ENCODE measurements at regions of chr6 and their contacts with region 1.

Region 1: DNA sequence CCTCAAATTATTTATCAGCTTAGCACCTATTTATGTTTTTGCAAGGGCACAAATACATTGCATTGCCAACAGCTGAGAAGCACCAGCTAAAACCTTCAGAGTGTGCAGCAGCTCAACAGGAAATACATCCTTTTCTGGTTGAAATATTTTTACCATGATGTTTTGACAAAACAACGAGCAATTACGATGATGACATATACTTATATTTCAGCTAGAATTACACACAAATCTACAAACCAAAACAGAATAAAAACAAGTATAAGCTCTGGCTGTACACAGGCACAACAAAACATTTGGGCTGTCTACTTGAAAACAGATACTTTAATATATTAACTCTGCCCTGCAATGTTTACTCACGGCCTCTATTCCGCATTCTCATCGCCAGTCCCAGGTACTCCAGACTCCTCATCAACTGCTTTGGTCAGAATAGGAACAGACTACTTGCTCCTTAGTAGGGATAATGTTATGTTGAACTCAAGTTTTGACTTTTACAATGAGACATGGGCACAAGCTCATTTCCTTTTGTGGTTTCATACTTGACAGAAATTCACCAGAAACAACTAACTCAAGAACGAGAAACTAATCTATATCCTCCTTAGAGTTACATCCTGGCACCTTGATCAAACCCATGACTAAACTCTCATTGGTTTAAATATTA is 377.6 kb downstream of the ESR1 start:
- DNase-seq: peak; percentile 66
- H3K4me3 ChIP-seq: peak overlapping the region; percentile 63
- H3K27ac ChIP-seq: peak overlapping the region; percentile 83
- H3K4me1 ChIP-seq: peaks cover 45% of the 10 kb centered on the region
- CTCF ChIP-seq: no peak

Region 2: DNA sequence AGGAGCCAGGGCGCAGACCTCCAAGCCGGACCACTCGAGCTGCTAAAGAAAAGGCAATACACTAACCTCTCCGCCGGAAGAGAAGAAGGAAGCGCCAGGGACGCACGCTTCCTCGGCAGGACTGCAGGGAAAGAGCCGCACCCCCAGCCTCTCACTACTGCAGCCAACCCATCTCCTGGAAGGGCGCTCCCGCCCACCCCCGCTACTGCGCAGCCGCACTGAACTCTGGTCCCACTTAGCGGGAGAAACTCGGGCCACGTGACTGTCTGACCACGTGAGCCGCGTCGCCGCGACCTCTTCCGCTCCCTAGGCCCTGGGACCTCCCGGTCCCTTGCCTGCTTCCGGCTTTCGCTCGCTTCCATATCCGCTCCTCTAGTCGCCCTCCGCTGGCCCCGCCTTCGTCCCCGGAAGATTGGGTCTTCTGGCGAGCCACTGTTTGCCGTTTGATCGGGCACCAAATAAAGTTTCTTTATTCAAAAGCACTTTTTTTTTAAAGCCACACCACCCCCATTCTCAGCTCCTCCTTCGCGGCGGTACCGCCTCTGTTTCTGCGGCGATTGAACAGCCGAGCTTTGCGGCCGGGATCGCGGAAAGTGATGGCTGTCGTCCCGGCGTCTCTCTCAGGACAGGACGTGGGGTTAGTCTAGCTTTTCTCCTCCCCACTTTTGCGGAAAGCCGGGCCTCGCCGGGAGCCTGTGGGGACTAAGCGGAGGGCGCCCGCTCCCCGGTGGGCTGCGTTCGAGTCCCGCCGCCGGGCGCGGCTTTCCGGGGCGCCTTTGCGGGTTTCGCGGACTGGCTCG is 732.9 kb before region 1 on chr6 and contains the start of gene RMND1:
- CTCF ChIA-PET with region 1: no interaction called
- POLR2A ChIA-PET with region 1: no interaction called
- intact Hi-C with region 1: no loop called
- DNase-seq: peak; percentile 100
- H3K4me3 ChIP-seq: peak within 1 kb of the TSS; percentile 79
- H3K27ac ChIP-seq: peak within 1 kb of the TSS; percentile 70
- H3K4me1 ChIP-seq: peaks cover 24% of the 10 kb centered on the region
- CTCF ChIP-seq: no peak
- total RNA-seq, gene RMND1: 10.2 and 21.2 TPM in 2 replicates

Region 3: DNA sequence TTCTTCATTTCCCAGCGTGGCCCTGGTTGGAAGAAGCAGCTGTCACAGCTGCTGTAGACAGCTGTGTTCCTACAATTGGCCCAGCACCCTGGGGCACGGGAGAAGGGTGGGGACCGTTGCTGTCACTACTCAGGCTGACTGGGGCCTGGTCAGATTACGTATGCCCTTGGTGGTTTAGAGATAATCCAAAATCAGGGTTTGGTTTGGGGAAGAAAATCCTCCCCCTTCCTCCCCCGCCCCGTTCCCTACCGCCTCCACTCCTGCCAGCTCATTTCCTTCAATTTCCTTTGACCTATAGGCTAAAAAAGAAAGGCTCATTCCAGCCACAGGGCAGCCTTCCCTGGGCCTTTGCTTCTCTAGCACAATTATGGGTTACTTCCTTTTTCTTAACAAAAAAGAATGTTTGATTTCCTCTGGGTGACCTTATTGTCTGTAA is 84.8 kb before region 1 on chr6:
- CTCF ChIA-PET with region 1: no interaction called
- POLR2A ChIA-PET with region 1: no interaction called
- intact Hi-C with region 1: no loop called
- DNase-seq: no peak
- H3K4me3 ChIP-seq: no peak overlapping the region
- H3K27ac ChIP-seq: no peak overlapping the region
- H3K4me1 ChIP-seq: no peaks in the 10 kb centered on the region
- CTCF ChIP-seq: no peak

Region 4: GRCh38 chr6:152167641-152168603 is 17.1 kb before region 1 on chr6:
- CTCF ChIA-PET with region 1: interaction called, 4 read pairs
- POLR2A ChIA-PET with region 1: interaction called, 13 read pairs
- intact Hi-C with region 1: no loop called
- DNase-seq: no peak
- H3K4me3 ChIP-seq: no peak overlapping the region
- H3K27ac ChIP-seq: no peak overlapping the region
- H3K4me1 ChIP-seq: no peaks in the 10 kb centered on the region
- CTCF ChIP-seq: no peak

Region 5: DNA sequence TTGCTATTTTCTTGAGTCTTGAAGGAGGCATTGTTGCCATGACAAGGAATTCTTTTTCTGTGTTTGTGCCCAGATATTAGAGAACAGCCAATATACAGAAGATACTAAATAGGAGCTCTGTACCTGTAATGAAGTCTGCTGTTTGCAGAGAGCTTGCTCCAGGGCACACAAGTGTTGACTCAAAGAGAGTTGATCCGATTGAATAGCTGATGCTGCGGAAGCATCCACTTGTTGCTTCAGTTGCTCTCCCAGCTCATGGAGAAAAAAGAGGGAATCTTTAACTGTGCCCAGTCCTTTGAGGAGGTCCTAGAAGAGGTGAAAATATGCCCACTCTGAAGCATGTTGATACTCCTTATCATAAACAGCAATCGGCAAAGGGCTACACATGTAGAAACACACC is 33.8 kb after region 1 on chr6:
- CTCF ChIA-PET with region 1: no interaction called
- POLR2A ChIA-PET with region 1: interaction called, 10 read pairs
- intact Hi-C with region 1: no loop called
- DNase-seq: no peak
- H3K4me3 ChIP-seq: no peak overlapping the region
- H3K27ac ChIP-seq: no peak overlapping the region
- H3K4me1 ChIP-seq: no peaks in the 10 kb centered on the region
- CTCF ChIP-seq: no peak

Region 6: GRCh38 chr6:152267967-152268845 is 83.2 kb after region 1 on chr6:
- CTCF ChIA-PET with region 1: no interaction called
- POLR2A ChIA-PET with region 1: no interaction called
- intact Hi-C with region 1: no loop called
- DNase-seq: peak; percentile 46
- H3K4me3 ChIP-seq: no peak overlapping the region
- H3K27ac ChIP-seq: no peak overlapping the region
- H3K4me1 ChIP-seq: no peaks in the 10 kb centered on the region
- CTCF ChIP-seq: peak; percentile 89

Region 7: GRCh38 chr6:152295346-152295745 is 110.3 kb after region 1 on chr6:
- CTCF ChIA-PET with region 1: interaction called, 3 read pairs
- POLR2A ChIA-PET with region 1: interaction called, 70 read pairs
- intact Hi-C with region 1: loop called (anchors 2 kb)
- DNase-seq: no peak
- H3K4me3 ChIP-seq: no peak overlapping the region
- H3K27ac ChIP-seq: no peak overlapping the region
- H3K4me1 ChIP-seq: peaks cover 43% of the 10 kb centered on the region
- CTCF ChIP-seq: no peak

Region 8: DNA sequence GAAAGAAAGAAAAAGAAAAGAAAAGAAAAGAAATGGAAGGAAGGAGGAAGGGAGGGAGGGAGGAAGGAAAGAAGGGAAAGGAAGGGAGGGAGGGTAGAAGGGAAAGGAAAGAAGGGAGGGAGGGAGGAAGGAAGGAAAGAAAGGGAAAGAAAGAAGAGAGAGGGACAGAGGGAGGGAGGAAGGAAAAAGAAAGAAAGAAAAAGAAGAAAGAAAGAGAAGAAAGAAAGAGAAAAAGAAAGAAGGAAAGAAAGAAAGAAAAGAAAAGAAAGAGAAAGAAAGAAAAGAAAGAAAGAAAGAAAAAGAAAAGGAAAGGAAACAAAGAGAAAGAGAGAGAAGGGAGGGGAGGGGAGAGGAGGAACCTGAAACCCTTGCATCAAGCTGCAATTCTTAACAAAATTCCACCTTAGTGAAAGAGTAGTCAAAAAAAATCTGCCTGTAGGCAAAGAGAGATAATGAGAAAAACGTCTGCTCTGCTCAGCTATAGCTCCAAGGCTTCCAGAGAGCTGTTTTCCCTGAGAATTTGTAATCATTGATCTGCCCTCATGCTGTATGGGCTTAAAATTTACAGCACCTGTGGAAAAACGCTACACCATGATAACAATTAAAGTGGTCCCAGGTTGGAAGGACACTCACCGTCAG is 496.0 kb after region 1 on chr6:
- CTCF ChIA-PET with region 1: no interaction called
- POLR2A ChIA-PET with region 1: interaction called, 11 read pairs
- intact Hi-C with region 1: loop called (anchors 5 kb)
- DNase-seq: no peak
- H3K4me3 ChIP-seq: peak overlapping the region; percentile 70
- H3K27ac ChIP-seq: peak overlapping the region; percentile 96
- H3K4me1 ChIP-seq: peaks cover 66% of the 10 kb centered on the region
- CTCF ChIP-seq: no peak

Region 9: GRCh38 chr6:152982768-152983636 is 798.0 kb after region 1 on chr6 and contains the start of gene FBXO5:
- CTCF ChIA-PET with region 1: no interaction called
- POLR2A ChIA-PET with region 1: interaction called, 3 read pairs
- intact Hi-C with region 1: loop called (anchors 5 kb)
- DNase-seq: peak; percentile 98
- H3K4me3 ChIP-seq: peak within 1 kb of the TSS; percentile 98
- H3K27ac ChIP-seq: peak within 1 kb of the TSS; percentile 87
- H3K4me1 ChIP-seq: peaks cover 44% of the 10 kb centered on the region
- CTCF ChIP-seq: no peak
- total RNA-seq, gene FBXO5: 47.8 and 53.2 TPM in 2 replicates